Activated CD4-positive, alpha-beta T cell treated with anti-CD3 and anti-CD28 coated beads for 36 hours (primary cell): ENCODE measurements at regions of chr1 and their contacts with region 1.

Region 1: GRCh38 chr1:101769520-101769919 is 227.2 kb downstream of the OLFM3 start:
- DNase-seq: no peak
- ATAC-seq: no peak
- H3K4me3 Mint-ChIP-seq: no peak overlapping the region
- H3K27ac Mint-ChIP-seq: no peak overlapping the region
- H3K4me1 Mint-ChIP-seq: no peaks in the 10 kb centered on the region
- H3K27me3 Mint-ChIP-seq: no peaks in the 10 kb centered on the region

Region 2: GRCh38 chr1:101712046-101712445 is 57.5 kb before region 1 on chr1:
- CTCF ChIA-PET with region 1: no interaction called
- POLR2A ChIA-PET with region 1: no interaction called
- intact Hi-C with region 1: loop called in 1 of 2 experiments (anchors 5 kb)
- DNase-seq: no peak
- ATAC-seq: no peak
- H3K4me3 Mint-ChIP-seq: no peak overlapping the region
- H3K27ac Mint-ChIP-seq: no peak overlapping the region
- H3K4me1 Mint-ChIP-seq: no peaks in the 10 kb centered on the region
- H3K27me3 Mint-ChIP-seq: peaks cover 4% of the 10 kb centered on the region